Mammary epithelial cell (primary cell): ENCODE measurements at regions of chr3 and their contacts with region 1.

Region 1: DNA sequence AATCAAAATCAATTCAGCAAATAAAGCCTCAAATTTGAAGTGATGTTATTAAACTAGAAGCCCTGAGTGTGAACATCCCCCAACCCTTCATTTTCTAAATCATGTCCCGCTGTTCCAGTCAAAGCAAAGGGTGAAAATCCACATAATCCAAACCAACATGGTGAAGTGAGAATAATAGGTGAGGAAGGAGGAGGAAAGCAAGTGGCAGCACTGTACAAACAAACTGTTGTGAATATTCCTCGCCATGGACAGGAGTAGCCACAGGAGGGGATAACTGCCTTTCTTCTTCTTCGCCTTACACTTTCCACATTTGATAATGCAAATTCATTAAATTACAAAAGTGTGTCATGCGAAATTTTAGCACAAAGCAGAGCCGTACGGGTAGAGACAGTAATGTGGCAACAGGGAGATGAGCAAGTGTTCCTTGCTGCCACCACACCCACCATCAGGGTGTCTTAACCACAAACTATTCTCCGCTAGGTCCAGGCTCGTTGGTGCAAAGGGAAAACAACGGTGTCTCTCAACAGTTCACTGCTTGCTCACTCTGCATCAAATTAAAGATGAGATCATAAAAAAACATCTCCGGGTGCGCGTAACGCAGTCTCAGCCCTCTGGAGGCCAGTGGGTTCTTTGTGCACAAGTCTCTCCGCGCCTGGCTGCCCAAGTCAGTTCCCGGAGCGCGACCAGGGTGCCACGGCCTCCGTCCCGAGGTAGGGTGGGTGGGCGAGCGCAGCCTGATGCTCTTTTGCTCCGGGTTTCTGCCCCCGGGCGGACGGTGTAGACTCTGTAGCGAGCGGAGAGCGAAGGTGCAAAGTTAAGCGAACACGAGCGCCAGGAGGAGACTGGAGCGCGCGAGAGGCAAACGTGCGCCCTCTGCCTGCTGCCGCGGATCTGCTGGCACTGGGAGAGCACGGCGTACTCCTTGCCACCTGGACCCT is 6.8 kb downstream of the EPHA3 start:
- DNase-seq: peak; percentile 84
- H3K4me3 ChIP-seq: peak overlapping the region; percentile 0 to 67 (median 55)
- H3K27ac ChIP-seq: no peak overlapping the region
- H3K4me1 ChIP-seq: peaks cover 12% of the 10 kb centered on the region
- H3K27me3 ChIP-seq: peaks cover 5% of the 10 kb centered on the region
- CTCF ChIP-seq: peak; percentile 53 to 88

Region 2: GRCh38 chr3:88219138-88219792 is 894.9 kb before region 1 on chr3:
- CTCF ChIA-PET with region 1: interaction called, 3 read pairs
- dilution Hi-C with region 1: no loop called
- in situ Hi-C with region 1: loop called (anchors 10 to 25 kb)
- intact Hi-C with region 1: loop called (anchors 1 kb)
- DNase-seq: peak; percentile 48
- H3K4me3 ChIP-seq: no peak overlapping the region
- H3K27ac ChIP-seq: no peak overlapping the region
- H3K4me1 ChIP-seq: no peaks in the 10 kb centered on the region
- H3K27me3 ChIP-seq: no peaks in the 10 kb centered on the region
- CTCF ChIP-seq: peak; percentile 62 to 80

Region 3: DNA sequence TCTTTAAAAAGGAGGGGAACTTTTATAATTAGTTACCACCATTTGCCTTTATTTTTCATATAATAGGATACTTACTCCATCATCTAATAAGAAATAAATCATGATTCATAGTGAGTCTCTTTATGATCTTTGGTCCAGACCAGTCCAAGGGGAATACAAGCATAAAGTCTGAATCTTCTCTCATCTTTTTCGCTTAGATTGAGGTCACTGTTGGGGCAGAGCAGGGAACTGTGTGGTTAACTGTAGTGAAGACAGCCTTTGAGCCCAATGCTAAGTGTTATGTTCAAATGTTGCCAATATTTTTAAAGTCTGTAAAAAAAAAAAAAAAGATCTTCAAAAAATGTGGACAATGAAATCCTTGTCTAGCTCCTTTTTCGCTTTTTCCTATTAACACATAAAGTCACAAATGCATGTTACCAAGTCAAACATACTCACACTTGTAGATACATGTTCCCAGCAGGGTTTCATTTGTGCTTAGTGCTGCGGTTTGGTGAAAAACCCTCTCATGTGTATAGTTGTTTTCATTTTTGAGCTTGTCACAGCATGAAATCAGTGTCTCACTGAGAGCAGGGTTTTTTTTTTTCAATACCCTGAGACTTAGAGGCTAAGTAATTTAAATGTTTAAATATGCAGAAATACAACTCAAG is 65.3 kb after region 1 on chr3:
- CTCF ChIA-PET with region 1: no interaction called
- dilution Hi-C with region 1: no loop called
- in situ Hi-C with region 1: no loop called
- intact Hi-C with region 1: loop called (anchors 10 kb)
- DNase-seq: peak; percentile 94
- H3K4me3 ChIP-seq: peak overlapping the region in 1 of 3 experiments; percentile 31
- H3K27ac ChIP-seq: peak overlapping the region; percentile 52
- H3K4me1 ChIP-seq: peaks cover 14% of the 10 kb centered on the region
- H3K27me3 ChIP-seq: no peaks in the 10 kb centered on the region
- CTCF ChIP-seq: no peak

Region 4: GRCh38 chr3:89851974-89852621 is 737.9 kb after region 1 on chr3:
- CTCF ChIA-PET with region 1: no interaction called
- dilution Hi-C with region 1: no loop called
- in situ Hi-C with region 1: no loop called
- intact Hi-C with region 1: loop called (anchors 10 kb)
- DNase-seq: no peak
- H3K4me3 ChIP-seq: no peak overlapping the region
- H3K27ac ChIP-seq: no peak overlapping the region
- H3K4me1 ChIP-seq: no peaks in the 10 kb centered on the region
- H3K27me3 ChIP-seq: no peaks in the 10 kb centered on the region
- CTCF ChIP-seq: peak; percentile 44 to 50